Heart right ventricle (tissue), 16 donors: ENCODE measurements at regions of chr4 and their contacts with region 1.

Region 1: GRCh38 chr4:173025131-173025530 is 143.5 kb upstream of the GALNT7 start:
- DNase-seq: peak in 1 of 2 donors; percentile 72
- ATAC-seq: peak in 7 of 8 donors; percentile 69 to 84 (median 80)
- H3K4me3 ChIP-seq: no peak overlapping the region
- H3K27ac ChIP-seq: no peak overlapping the region
- H3K4me1 ChIP-seq: peaks cover 0 to 8% (median 0%) of the 10 kb centered on the region in 9 donors
- H3K27me3 ChIP-seq: no peaks in the 10 kb centered on the region
- CTCF ChIP-seq: peak; percentile 38 to 77 (median 71)

Region 2: GRCh38 chr4:172998527-172999469 is 26.3 kb before region 1 on chr4:
- intact Hi-C with region 1: no loop called
- DNase-seq: no peak
- ATAC-seq: peak in 4 of 8 donors; percentile 41 to 60 (median 58)
- H3K4me3 ChIP-seq: no peak overlapping the region
- H3K27ac ChIP-seq: no peak overlapping the region
- H3K4me1 ChIP-seq: peaks cover 0 to 13% (median 0%) of the 10 kb centered on the region in 9 donors
- H3K27me3 ChIP-seq: no peaks in the 10 kb centered on the region
- CTCF ChIP-seq: no peak

Region 3: DNA sequence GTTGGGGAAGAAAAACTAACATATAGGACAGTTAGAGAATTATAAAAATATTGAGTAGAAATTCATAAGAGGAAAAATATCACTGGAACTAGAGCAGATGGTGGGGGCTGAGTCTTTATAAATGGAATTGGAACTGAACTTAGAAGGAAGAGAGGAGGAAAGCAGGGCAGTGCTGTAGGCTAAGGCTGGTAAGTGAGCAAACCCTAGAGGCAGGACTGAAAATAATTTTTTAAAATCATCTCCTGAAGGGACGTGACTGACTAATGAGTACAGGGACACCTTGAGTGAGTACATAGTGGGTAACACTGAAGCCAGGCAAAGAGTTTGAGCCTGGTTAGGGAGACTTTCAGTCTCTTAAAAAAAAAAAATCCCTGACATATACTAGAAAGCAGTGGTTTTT is 206.8 kb after region 1 on chr4:
- intact Hi-C with region 1: loop called in 1 of 10 experiments (anchors 5 kb)
- DNase-seq: no peak
- ATAC-seq: peak in 6 of 8 donors; percentile 46 to 66 (median 56)
- H3K4me3 ChIP-seq: no peak overlapping the region
- H3K27ac ChIP-seq: peak overlapping the region in 1 of 10 donors; percentile 3
- H3K4me1 ChIP-seq: peaks cover 0 to 23% (median 12%) of the 10 kb centered on the region in 9 donors
- H3K27me3 ChIP-seq: no peaks in the 10 kb centered on the region
- CTCF ChIP-seq: peak in 6 of 9 donors; percentile 14 to 45 (median 29)

Region 4: GRCh38 chr4:173243917-173244658 is 219.0 kb after region 1 on chr4:
- intact Hi-C with region 1: loop called in 1 of 10 experiments (anchors 5 kb)
- DNase-seq: no peak
- ATAC-seq: no peak
- H3K4me3 ChIP-seq: no peak overlapping the region
- H3K27ac ChIP-seq: no peak overlapping the region
- H3K4me1 ChIP-seq: peaks cover 0 to 3% (median 0%) of the 10 kb centered on the region in 9 donors
- H3K27me3 ChIP-seq: no peaks in the 10 kb centered on the region
- CTCF ChIP-seq: no peak

Region 5: GRCh38 chr4:173257732-173258717 is 232.9 kb after region 1 on chr4:
- intact Hi-C with region 1: loop called in 6 of 10 experiments (anchors 1 to 5 kb)
- DNase-seq: peak; percentile 33 to 61
- ATAC-seq: peak; percentile 78 to 97 (median 92)
- H3K4me3 ChIP-seq: no peak overlapping the region
- H3K27ac ChIP-seq: no peak overlapping the region
- H3K4me1 ChIP-seq: peaks cover 0 to 3% (median 0%) of the 10 kb centered on the region in 9 donors
- H3K27me3 ChIP-seq: no peaks in the 10 kb centered on the region
- CTCF ChIP-seq: peak; percentile 47 to 92 (median 77)